ENCODE measurements at regions of chr3 and their contacts with region 1.

Region 1: DNA sequence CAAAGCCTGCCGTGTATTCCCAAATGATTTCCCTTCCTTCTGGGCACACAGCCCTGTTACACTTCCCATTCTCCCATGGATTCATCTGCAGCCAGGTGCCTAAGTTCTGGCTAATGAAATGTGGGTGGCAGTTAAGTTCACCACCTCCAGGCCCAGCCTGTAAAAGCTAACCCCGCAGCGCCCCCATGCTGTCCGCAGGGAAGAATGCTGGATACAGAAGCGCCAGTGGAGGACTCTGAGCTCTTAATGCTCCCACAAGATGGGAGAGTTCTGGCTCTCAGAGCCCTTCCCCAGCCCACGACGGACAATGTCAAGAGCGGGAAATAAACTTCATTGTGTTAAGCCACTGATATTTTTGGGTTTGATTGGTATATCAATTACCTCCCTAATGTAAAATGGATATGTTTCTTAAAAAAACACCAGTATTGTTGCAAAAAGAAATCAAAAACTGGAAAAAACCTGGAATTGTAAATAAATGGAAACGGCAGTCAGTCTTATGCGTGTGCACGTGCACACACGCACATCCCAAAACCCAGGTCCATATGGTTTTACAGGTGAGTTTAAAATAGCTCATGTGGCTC is 37.7 kb upstream of the FGD5 start:
- DNase-seq: peak; percentile 82
- H3K4me3 ChIP-seq: no peak overlapping the region
- H3K27ac ChIP-seq: no peak overlapping the region
- H3K4me1 ChIP-seq: no peaks in the 10 kb centered on the region
- CTCF ChIP-seq: peak; percentile 96

Region 2: GRCh38 chr3:14508961-14509795 is 271.8 kb before region 1 on chr3:
- CTCF ChIA-PET with region 1: no interaction called
- POLR2A ChIA-PET with region 1: no interaction called
- intact Hi-C with region 1: loop called (anchors 10 kb)
- DNase-seq: peak; percentile 69
- H3K4me3 ChIP-seq: no peak overlapping the region
- H3K27ac ChIP-seq: no peak overlapping the region
- H3K4me1 ChIP-seq: no peaks in the 10 kb centered on the region
- CTCF ChIP-seq: peak; percentile 84

Region 3: DNA sequence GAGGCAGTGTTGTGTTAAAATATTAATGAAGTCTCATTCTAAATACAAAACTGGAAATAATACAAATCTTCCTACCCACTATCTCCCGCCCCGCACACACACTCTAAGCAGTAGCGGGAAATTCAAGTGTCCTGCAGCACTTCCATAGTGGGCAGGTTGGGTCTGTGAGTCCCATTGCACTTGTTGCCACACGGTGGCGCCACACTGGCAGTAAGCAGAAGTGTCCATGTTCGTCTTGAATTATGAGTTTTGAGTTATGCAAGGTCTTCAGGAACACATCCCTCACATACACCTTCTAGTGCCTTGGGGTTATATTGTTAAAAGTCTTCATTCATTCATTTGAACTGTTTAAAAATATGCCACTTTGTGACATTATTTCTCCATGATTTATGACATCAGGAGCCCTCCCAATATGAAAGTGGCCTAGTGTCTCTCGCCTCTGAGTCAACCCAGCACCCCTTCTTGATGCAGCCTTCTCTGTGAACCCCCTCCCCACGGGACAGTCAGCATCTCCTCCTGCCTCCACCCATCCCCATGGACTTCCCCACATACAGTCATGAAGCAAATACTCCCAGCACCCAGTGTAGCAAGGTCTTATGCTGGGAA is 147.1 kb before region 1 on chr3:
- CTCF ChIA-PET with region 1: interaction called, 5 read pairs
- POLR2A ChIA-PET with region 1: no interaction called
- intact Hi-C with region 1: loop called (anchors 1 kb)
- DNase-seq: peak; percentile 77
- H3K4me3 ChIP-seq: no peak overlapping the region
- H3K27ac ChIP-seq: no peak overlapping the region
- H3K4me1 ChIP-seq: no peaks in the 10 kb centered on the region
- CTCF ChIP-seq: peak; percentile 96

Region 4: DNA sequence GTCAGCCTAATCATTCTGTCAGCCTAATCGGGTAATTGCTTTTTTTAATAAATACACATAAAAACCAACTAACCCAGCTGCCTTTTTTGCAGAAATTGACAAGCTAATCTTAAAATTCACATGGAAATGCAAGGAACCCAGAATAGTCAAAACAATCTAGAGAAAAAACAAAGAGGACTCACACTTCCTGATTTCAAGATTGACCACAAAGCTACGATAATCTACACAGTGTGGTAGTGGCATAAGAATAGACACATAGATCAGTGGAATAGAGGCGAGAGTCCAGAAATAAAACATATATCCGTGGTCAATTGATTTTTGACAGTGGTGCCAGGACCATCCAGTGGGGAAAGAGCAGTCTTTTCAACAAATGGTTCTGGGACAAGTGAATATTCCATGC is 108.4 kb before region 1 on chr3:
- CTCF ChIA-PET with region 1: interaction called, 29 read pairs
- POLR2A ChIA-PET with region 1: interaction called, 49 read pairs
- intact Hi-C with region 1: loop called (anchors 1 kb)
- DNase-seq: no peak
- H3K4me3 ChIP-seq: no peak overlapping the region
- H3K27ac ChIP-seq: no peak overlapping the region
- H3K4me1 ChIP-seq: peaks cover 3% of the 10 kb centered on the region
- CTCF ChIP-seq: no peak

Region 5: DNA sequence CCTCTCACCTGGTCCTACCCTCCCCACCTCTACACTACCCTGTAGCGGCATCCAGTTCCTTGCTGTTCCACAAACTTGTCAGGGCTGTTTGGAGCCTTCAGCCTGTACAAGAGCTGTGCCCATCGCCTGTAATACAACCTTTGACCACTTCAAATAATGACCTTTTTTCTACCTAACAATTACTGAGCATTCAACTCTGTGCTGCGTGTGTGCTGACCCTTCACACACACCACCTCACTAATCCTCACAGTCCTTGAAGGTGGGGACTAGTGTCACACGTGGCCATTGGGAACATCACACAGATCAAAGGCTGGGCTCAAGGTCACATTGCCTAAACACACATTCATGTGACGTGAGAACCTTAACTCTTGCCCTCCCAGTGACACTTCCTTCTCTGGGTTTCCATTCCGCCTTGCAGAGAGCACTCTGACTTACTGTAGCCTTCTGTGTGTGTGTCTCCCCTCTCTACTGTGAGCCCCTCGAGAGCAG is 103.0 kb before region 1 on chr3:
- CTCF ChIA-PET with region 1: interaction called, 29 read pairs
- POLR2A ChIA-PET with region 1: interaction called, 49 read pairs
- intact Hi-C with region 1: loop called (anchors 1 kb)
- DNase-seq: no peak
- H3K4me3 ChIP-seq: no peak overlapping the region
- H3K27ac ChIP-seq: no peak overlapping the region
- H3K4me1 ChIP-seq: peaks cover 9% of the 10 kb centered on the region
- CTCF ChIP-seq: no peak

Region 6: DNA sequence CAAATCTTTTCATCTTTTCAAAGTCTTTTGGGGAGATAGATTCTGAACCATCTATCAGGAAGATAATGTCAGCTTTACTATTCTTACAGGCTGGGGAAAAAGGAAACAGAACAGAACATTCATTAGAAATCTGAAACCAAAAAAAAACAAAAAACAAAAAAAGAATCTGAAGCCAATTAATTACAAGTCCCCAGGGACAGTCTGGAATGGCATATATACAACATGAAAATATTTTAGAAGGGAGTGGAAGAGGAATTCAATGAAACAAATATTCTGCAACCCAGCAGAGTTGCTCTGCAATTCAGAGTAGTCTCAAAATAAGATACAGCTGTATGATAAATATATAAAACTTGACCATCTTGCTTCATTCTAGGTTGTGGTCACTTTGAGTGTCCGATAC is 383.3 kb after region 1 on chr3:
- CTCF ChIA-PET with region 1: no interaction called
- POLR2A ChIA-PET with region 1: no interaction called
- intact Hi-C with region 1: no loop called
- DNase-seq: no peak
- H3K4me3 ChIP-seq: no peak overlapping the region
- H3K27ac ChIP-seq: no peak overlapping the region
- H3K4me1 ChIP-seq: no peaks in the 10 kb centered on the region
- CTCF ChIP-seq: no peak

Measured in OCI-LY7 (cell line).